ENCODE measurements at regions of chr17 and their contacts with region 1.

Region 1: DNA sequence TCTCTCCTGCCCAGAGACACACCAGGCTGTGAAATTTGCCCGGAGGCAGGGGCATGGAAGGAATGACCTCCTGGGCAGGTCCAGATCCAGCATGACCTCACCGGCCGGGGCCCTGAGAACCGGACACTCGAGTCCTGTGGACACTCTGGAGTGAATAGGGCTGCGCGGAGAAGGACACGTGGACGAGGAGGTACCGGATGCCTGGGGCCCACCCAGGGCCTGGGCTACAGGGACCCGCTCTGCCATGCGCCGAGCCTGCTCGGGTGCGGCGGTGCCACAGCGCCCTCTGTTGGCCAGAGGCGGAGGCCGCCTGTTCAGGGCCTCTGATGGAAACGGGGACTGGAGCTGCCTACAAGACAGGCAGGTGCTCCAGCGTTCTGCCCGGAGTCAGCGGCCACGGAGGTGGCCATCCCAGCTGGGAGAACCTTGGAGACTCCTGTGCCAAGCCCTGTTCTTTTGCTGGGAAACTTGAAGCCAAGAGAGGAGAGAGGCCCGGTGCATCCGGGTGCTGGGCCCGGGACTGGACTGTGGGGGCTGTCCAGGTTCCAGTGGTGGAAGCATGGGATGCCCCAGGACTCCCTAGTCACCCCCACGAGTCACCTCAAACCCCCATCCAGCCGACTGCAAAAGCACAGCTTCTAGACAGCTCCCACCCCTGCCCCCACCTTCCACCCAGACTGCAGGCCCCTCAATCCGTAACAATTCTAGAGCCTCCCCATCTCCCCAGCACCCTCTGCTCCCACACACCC is 19.3 kb upstream of the NXPH3 start:
- DNase-seq: peak; percentile 86 to 94 (median 91)
- H3K4me3 ChIP-seq: no peak overlapping the region
- H3K27ac ChIP-seq: no peak overlapping the region
- H3K4me1 ChIP-seq: peaks cover 0 to 4% (median 0%) of the 10 kb centered on the region in 3 donors
- H3K27me3 ChIP-seq: no peaks in the 10 kb centered on the region
- CTCF ChIP-seq: peak; percentile 97

Region 2: DNA sequence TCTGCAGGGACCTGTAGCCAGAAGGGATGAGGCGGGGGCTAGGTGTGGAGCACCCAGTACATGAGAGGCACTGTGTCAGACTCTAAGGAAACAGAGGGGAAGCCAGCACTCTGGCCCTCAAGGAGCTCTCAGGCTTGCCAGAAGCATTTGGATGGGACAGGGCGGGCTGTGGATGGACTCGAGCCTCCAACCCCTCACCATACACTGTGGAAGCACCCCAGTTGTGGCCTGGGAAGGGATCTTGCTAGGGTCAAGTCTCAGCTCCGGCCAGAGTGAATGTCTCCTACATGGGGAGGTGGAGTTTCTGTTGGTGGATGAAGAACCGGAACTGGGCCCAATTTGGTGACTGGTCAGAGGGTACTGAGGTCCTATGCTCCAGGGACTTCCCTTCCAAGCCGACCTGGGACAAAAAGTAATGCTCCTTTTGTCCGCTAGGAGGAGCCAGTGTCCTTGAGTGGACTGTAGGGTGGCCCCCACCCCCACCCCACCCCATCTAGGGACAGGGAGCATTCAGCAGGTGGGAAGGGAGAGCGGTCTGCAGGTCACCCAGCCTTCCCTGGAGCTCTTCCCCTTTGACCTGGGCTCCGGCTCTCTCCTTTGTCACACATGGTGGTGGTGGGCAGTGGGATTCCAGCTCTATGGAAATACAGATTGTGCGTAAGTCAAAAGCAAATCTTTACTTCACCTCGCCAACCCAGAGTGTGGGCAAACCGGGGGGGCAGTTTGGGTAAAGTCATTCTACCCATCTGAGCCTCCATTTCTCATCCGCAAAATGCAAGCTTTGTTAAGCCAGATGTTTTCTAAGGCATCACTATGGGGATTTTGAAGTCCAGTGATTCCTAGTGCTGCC is 121.4 kb before region 1 on chr17:
- intact Hi-C with region 1: loop called (anchors 10 kb)
- DNase-seq: peak in 4 of 5 donors; percentile 45 to 68 (median 60)
- H3K4me3 ChIP-seq: no peak overlapping the region
- H3K27ac ChIP-seq: no peak overlapping the region
- H3K4me1 ChIP-seq: peaks cover 0 to 2% (median 0%) of the 10 kb centered on the region in 3 donors
- H3K27me3 ChIP-seq: no peaks in the 10 kb centered on the region
- CTCF ChIP-seq: peak; percentile 56

Region 3: DNA sequence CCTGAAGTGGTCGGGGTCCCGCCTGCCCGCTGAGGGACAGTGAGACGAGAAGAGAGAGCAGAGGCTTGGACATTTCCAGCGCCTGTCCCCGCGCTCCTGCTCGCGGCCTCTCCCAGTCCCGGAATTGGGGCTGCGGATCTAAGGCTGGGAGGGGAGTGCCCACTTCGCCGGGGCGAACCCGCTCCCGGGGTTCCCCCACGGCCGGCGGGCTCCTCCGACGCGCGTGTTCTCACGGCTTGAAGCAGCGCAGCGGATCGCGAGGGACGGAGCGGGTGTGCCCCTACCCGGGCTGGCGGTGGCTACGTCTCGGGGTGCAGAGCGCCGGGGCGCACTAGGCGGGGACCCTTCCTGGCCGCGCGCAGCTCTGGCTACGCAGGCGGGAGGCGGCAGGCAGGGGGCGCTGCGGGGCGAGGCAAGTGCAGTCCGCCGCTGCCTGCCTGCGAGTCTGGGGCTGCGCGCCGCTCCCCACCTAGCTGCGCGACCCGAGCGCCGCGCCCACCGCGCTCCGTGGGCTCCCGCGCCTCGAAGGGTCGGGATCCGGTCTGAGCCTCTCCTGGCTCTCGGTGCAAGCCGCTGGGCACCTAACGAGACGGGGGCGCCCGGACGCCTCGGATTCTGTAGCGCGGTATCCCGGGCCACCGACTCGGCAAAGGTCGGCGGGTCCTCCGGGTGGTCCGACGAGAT is 60.1 kb before region 1 on chr17:
- intact Hi-C with region 1: loop called (anchors 10 kb)
- DNase-seq: peak; percentile 73 to 90 (median 86)
- H3K4me3 ChIP-seq: peak overlapping the region in 2 of 3 donors; percentile 48 to 51
- H3K27ac ChIP-seq: no peak overlapping the region
- H3K4me1 ChIP-seq: peaks cover 0 to 20% (median 0%) of the 10 kb centered on the region in 3 donors
- H3K27me3 ChIP-seq: peaks cover 16% of the 10 kb centered on the region
- CTCF ChIP-seq: peak; percentile 89

Region 4: DNA sequence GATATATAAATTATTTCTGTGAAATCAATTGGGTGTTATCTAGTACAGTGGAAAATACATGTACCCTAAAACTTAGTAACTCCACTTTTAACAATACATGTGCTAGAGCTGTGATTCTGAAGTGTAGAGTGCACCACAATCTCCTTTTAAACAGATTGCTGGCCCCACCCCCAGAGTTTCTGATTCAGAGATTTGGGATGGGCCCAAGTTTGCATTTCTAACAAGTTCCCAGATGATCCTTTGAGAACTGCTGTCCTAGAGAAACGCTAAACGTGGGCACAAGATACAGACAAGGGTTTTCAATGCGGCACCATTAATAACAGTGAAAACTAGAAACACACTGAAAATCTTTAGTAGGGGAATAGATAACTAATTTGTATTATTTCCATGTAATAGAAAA is 68.5 kb after region 1 on chr17:
- intact Hi-C with region 1: no loop called
- DNase-seq: no peak
- H3K4me3 ChIP-seq: no peak overlapping the region
- H3K27ac ChIP-seq: no peak overlapping the region
- H3K4me1 ChIP-seq: peaks cover 0 to 5% (median 2%) of the 10 kb centered on the region in 3 donors
- H3K27me3 ChIP-seq: no peaks in the 10 kb centered on the region
- CTCF ChIP-seq: no peak